Activated naive CD4-positive, alpha-beta T cell treated with anti-CD3 and anti-CD28 coated beads, Interleukin-2, amount 10 ng/mL, durations not matched to agents 7 days and 5 days (primary cell): ENCODE measurements at regions of chr1 and their contacts with region 1.

Region 1: GRCh38 chr1:36187800-36188593 is 32.0 kb downstream of the MAP7D1 start:
- DNase-seq: peak; percentile 89
- H3K4me3 Mint-ChIP-seq: no peak overlapping the region
- H3K27ac Mint-ChIP-seq: peak overlapping the region; percentile 24
- H3K4me1 Mint-ChIP-seq: peaks cover 12% of the 10 kb centered on the region
- H3K27me3 Mint-ChIP-seq: no peaks in the 10 kb centered on the region

Region 2: GRCh38 chr1:36099681-36100341 is 88.2 kb before region 1 on chr1:
- CTCF ChIA-PET with region 1: interaction called, 38 read pairs
- DNase-seq: peak; percentile 85
- H3K4me3 Mint-ChIP-seq: no peak overlapping the region
- H3K27ac Mint-ChIP-seq: no peak overlapping the region
- H3K4me1 Mint-ChIP-seq: peaks cover 3% of the 10 kb centered on the region
- H3K27me3 Mint-ChIP-seq: peaks cover 9% of the 10 kb centered on the region

Region 3: DNA sequence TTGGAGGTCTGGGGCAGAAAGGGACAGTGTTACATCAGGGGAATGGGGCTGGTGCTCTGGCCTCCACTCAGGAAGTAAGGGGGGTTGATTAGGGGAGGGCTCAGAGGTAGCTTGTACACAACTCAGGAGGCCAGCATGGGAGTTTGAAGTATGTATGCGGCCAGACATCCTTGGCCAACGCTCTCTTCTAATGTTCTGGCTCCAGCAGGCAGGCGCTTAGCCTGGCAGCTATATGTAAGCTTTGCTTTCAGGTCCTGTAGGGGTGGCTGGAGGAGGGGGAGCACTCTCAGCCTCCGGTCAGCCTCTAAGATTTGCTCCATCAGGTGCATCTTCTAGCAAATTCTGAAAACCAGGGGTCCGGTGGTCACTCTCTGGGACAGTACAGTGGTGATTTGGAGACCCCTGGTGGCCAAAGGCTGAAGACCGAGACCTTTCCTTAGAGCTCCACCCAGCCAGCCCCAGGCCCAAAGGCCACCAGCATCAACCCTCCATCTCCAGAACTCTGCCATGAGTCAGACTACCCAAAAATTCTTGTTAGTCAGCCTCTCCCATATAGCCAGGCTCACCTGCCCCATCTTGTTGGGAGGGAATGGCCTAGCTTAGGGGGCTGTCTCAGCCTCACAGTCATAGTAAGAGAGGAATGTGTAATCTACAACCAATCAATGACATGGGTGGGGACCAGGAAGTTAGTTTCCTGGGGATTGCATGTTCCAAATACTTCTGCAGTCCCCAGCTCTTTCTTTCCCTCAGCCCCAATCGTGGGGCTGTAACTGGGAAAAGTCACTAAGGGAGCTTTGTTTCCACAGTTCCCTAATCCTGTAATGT is 53.3 kb before region 1 on chr1:
- CTCF ChIA-PET with region 1: interaction called, 19 read pairs
- DNase-seq: peak; percentile 57
- H3K4me3 Mint-ChIP-seq: no peak overlapping the region
- H3K27ac Mint-ChIP-seq: no peak overlapping the region
- H3K4me1 Mint-ChIP-seq: peaks cover 8% of the 10 kb centered on the region
- H3K27me3 Mint-ChIP-seq: no peaks in the 10 kb centered on the region

Region 4: DNA sequence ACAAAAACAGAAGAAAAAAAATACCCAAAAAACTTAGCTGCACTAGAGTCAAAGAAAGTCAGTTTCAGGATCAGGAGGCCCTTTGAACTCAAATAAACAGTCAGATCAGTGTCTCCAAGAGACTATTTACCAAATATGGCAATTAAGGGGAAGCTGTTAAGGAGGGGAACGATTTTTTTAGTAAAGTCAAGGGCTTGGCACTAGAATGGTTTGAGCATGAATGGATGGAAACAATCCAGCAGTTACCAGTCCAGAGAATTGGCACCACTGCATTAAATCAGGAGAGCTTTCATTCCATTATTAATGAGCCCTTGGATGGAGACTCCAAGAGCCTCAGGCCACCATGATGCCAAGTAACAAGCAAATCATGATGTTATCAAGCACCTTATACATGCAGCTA is 45.9 kb before region 1 on chr1:
- CTCF ChIA-PET with region 1: interaction called, 14 read pairs
- DNase-seq: no peak
- H3K4me3 Mint-ChIP-seq: no peak overlapping the region
- H3K27ac Mint-ChIP-seq: no peak overlapping the region
- H3K4me1 Mint-ChIP-seq: peaks cover 37% of the 10 kb centered on the region
- H3K27me3 Mint-ChIP-seq: no peaks in the 10 kb centered on the region

Region 5: GRCh38 chr1:36160949-36161485 is 27.0 kb before region 1 on chr1:
- CTCF ChIA-PET with region 1: interaction called, 179 read pairs
- DNase-seq: peak; percentile 86
- H3K4me3 Mint-ChIP-seq: peak overlapping the region; percentile 71
- H3K27ac Mint-ChIP-seq: peak overlapping the region; percentile 91
- H3K4me1 Mint-ChIP-seq: peaks cover 69% of the 10 kb centered on the region
- H3K27me3 Mint-ChIP-seq: no peaks in the 10 kb centered on the region

Region 6: DNA sequence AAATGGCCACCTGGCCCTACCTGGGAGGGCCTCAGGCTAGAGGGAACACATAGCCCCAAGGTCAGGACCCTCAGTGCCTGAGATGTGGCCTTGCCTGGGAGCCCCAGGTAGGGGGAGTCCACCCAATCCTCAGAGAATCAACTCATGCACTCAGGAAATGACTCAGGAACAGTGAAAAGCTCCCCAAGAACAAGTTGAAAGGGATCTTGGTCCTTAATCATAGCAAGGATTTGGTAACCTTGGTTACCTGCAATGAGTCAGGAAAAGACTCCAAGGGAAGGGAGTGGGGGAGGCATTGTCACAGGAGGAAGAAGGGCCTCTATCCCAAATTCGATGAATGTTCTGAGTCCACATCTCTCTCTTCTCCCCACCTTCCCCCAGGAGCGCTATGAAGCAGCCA is 15.0 kb before region 1 on chr1:
- CTCF ChIA-PET with region 1: interaction called, 16 read pairs
- DNase-seq: no peak
- H3K4me3 Mint-ChIP-seq: no peak overlapping the region
- H3K27ac Mint-ChIP-seq: no peak overlapping the region
- H3K4me1 Mint-ChIP-seq: peaks cover 4% of the 10 kb centered on the region
- H3K27me3 Mint-ChIP-seq: no peaks in the 10 kb centered on the region

Region 7: GRCh38 chr1:36323597-36324352 is 135.8 kb after region 1 on chr1 and contains the start of gene EVA1B:
- CTCF ChIA-PET with region 1: no interaction called
- DNase-seq: peak; percentile 80
- H3K4me3 Mint-ChIP-seq: peak within 1 kb of the TSS; percentile 73
- H3K27ac Mint-ChIP-seq: peak within 1 kb of the TSS; percentile 37
- H3K4me1 Mint-ChIP-seq: peaks cover 45% of the 10 kb centered on the region
- H3K27me3 Mint-ChIP-seq: peaks cover 64% of the 10 kb centered on the region